Naive thymus-derived CD4-positive, alpha-beta T cell (primary cell): ENCODE measurements at regions of chr4 and their contacts with region 1.

Region 1: DNA sequence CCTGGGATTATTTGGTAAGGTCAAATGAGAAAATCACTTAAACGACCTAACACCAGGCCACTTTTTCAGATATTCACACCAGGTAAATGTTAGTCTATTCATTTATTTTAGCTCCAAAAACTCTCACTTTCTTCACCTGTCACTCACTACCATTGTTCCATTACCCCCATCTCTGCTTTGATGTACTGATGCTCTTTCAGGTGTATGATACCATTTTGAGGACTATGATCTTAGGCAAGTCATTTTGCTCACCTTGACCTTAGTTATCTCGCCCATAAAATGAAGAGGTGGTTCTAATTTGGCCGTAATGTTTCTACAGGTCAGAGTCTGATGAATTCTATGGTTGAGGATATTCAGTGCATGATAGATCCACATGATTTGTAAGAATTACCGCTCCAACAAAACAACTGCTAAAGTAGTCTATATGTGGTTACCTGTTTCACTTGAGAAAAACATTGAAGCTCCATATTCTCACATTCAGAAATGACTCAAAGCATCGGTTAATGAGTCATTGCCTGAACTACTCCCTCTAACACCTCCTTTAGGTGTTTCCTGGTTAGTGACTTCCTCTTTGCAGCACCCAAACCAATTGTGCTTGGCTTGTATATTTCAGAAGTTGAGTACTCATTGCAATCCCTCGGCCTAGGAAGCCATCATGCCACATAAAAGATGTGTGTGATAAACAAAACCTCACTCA is 4.5 kb downstream of the DTHD1 start:
- DNase-seq: peak in 8 of 9 donors; percentile 15 to 62 (median 47)
- ATAC-seq: peak; percentile 93
- H3K4me3 ChIP-seq: peak overlapping the region; percentile 22
- H3K4me3 Mint-ChIP-seq: peak overlapping the region in 7 of 10 donors; percentile 25 to 80 (median 38)
- H3K27ac ChIP-seq: peak overlapping the region; percentile 8
- H3K27ac Mint-ChIP-seq: peak overlapping the region in 8 of 9 donors; percentile 38 to 96 (median 71)
- H3K4me1 ChIP-seq: peaks cover 6 to 28% of the 10 kb centered on the region in 2 donors
- H3K4me1 Mint-ChIP-seq: peaks cover 5 to 65% (median 11%) of the 10 kb centered on the region in 7 donors
- H3K27me3 ChIP-seq: no peaks in the 10 kb centered on the region
- H3K27me3 Mint-ChIP-seq: no peaks in the 10 kb centered on the region

Region 2: DNA sequence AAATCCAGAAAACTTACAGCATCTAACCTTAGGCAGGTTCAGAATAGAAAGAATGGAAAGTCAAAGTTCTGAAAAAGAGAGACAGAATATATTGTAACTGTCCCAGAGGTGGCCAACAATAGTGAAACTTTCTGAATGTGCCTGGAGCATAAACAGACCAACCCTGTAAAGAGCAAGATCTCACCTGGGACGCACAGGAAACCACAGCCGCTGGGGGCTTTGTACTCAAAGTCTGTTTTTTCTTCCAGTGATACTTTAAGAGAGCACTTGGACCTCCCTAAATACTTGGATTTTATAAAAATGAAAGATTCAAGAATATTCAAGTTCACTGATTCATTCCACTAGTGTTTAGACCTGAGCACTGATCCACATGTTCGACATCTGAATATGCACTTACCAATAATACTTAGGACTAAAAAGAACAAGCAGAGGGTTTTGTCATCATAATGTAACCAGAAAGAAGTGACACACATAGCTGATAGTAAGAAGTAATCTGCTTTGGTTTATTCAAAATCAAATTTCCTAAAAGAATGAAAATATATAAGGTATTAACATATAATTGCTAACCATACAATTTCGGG is 76.9 kb before region 1 on chr4:
- CTCF ChIA-PET with region 1: no interaction called
- POLR2A ChIA-PET with region 1: no interaction called
- intact Hi-C with region 1: loop called in 1 of 2 experiments (anchors 1 kb)
- DNase-seq: peak in 6 of 9 donors; percentile 22 to 42 (median 32)
- ATAC-seq: peak; percentile 79
- H3K4me3 ChIP-seq: no peak overlapping the region
- H3K4me3 Mint-ChIP-seq: peak overlapping the region in 9 of 10 donors; percentile 34 to 68 (median 57)
- H3K27ac ChIP-seq: no peak overlapping the region
- H3K27ac Mint-ChIP-seq: peak overlapping the region in 7 of 9 donors; percentile 20 to 84 (median 45)
- H3K4me1 ChIP-seq: peaks cover 5 to 45% of the 10 kb centered on the region in 2 donors
- H3K4me1 Mint-ChIP-seq: peaks cover 16 to 53% (median 43%) of the 10 kb centered on the region in 7 donors
- H3K27me3 ChIP-seq: no peaks in the 10 kb centered on the region
- H3K27me3 Mint-ChIP-seq: no peaks in the 10 kb centered on the region

Region 3: DNA sequence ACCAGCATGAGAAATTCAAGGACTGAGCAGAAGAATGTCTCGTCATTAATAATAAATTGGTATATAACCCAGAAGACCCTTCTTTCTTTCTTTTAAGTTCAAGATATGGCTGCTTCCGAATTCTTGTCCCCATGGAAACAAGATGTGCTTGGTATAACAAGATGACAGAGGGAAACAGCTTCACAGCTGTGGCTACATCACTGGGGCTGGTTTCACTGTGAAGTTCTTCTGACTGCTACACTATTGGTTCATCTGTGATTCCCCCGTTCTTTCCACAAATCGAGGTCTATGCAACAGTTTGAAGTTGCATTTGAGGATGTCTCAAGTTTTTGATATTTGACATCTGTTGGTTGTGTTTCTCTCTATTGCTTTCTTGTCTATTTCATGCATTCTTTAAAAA is 16.8 kb before region 1 on chr4:
- CTCF ChIA-PET with region 1: no interaction called
- POLR2A ChIA-PET with region 1: no interaction called
- intact Hi-C with region 1: loop called in 1 of 2 experiments (anchors 1 kb)
- DNase-seq: peak in 7 of 9 donors; percentile 27 to 66 (median 47)
- ATAC-seq: peak; percentile 96
- H3K4me3 ChIP-seq: no peak overlapping the region
- H3K4me3 Mint-ChIP-seq: no peak overlapping the region
- H3K27ac ChIP-seq: no peak overlapping the region
- H3K27ac Mint-ChIP-seq: peak overlapping the region in 8 of 9 donors; percentile 10 to 85 (median 52)
- H3K4me1 ChIP-seq: peaks cover 7 to 27% of the 10 kb centered on the region in 2 donors
- H3K4me1 Mint-ChIP-seq: peaks cover 2 to 46% (median 32%) of the 10 kb centered on the region in 7 donors
- H3K27me3 ChIP-seq: no peaks in the 10 kb centered on the region
- H3K27me3 Mint-ChIP-seq: peaks cover 0 to 3% (median 0%) of the 10 kb centered on the region in 5 donors

Region 4: DNA sequence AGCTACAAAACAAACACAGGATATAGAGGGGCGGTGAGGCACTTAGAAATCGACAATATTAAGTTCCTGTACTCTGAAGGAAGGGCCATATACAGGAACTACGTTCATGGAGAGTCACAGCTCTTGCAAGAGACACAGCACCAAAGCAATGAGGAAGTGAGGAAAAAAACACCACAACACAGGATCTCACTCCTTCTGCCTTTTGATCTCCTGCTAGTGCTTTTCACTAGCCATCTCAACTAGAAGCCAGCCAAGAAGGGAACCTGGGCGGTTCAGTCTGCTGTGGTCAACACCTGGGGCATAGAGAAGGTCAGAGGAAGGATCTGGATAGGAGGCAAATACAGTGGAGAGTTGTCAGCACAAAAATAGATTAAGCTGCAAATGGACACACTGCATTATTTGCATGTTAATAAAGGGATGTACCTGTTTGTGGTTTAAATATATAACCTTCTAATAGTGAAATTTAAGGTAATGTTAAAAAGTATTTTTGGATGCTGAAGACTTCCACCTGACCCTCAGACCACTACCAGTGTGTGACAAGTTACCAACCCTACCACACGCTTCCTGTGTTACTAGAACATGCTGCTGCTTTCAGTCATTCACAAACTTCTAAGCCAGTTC is 100.1 kb after region 1 on chr4:
- CTCF ChIA-PET with region 1: no interaction called
- POLR2A ChIA-PET with region 1: interaction called, 3 read pairs
- intact Hi-C with region 1: loop called in 1 of 2 experiments (anchors 2 kb)
- DNase-seq: peak; percentile 8 to 89 (median 82)
- ATAC-seq: peak; percentile 99
- H3K4me3 ChIP-seq: peak overlapping the region; percentile 29
- H3K4me3 Mint-ChIP-seq: peak overlapping the region; percentile 46 to 84 (median 70)
- H3K27ac ChIP-seq: peak overlapping the region; percentile 70
- H3K27ac Mint-ChIP-seq: peak overlapping the region; percentile 92 to 99 (median 94)
- H3K4me1 ChIP-seq: peaks cover 22% of the 10 kb centered on the region in 2 donors
- H3K4me1 Mint-ChIP-seq: peaks cover 19 to 51% (median 40%) of the 10 kb centered on the region in 7 donors
- H3K27me3 ChIP-seq: no peaks in the 10 kb centered on the region
- H3K27me3 Mint-ChIP-seq: peaks cover 0 to 11% (median 0%) of the 10 kb centered on the region in 5 donors